ENCODE measurements at regions of chr1 and their contacts with region 1.

Region 1: GRCh38 chr1:75203415-75204277 is 69.5 kb downstream of the LHX8 start:
- DNase-seq: peak; percentile 37
- H3K4me3 ChIP-seq: no peak overlapping the region
- H3K27ac ChIP-seq: no peak overlapping the region
- H3K4me1 ChIP-seq: no peaks in the 10 kb centered on the region
- CTCF ChIP-seq: peak; percentile 88

Region 2: DNA sequence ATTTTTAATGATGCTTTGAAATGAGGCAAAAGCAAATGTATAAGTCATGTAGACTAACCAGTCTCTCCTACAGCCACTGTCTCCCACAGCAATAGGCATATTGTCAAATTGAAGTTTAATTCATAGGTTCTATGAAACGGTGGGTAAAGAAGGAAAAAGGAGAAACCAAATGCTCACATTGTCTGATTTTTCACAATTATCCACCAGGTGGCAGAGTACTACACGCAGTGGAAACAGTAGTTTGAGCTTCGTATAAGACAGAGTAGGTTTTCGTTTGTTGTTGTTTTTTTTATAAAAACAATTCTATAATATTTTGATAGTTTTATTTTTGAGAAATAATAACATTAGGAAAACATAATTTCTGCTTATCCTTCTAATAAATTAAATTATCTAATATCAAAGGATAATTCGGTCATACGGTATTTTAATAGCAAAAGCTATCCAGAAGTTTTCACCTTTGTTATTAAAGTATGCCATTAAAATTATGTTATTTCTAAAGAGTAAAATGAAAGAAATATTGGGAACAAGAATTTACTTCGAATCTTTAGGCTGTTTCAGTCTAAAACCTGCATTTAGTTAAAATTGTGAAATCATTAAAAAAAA is 431.6 kb before region 1 on chr1:
- CTCF ChIA-PET with region 1: no interaction called
- POLR2A ChIA-PET with region 1: no interaction called
- intact Hi-C with region 1: loop called (anchors 1 kb)
- DNase-seq: peak; percentile 47
- H3K4me3 ChIP-seq: no peak overlapping the region
- H3K27ac ChIP-seq: no peak overlapping the region
- H3K4me1 ChIP-seq: no peaks in the 10 kb centered on the region
- CTCF ChIP-seq: peak; percentile 86

Region 3: DNA sequence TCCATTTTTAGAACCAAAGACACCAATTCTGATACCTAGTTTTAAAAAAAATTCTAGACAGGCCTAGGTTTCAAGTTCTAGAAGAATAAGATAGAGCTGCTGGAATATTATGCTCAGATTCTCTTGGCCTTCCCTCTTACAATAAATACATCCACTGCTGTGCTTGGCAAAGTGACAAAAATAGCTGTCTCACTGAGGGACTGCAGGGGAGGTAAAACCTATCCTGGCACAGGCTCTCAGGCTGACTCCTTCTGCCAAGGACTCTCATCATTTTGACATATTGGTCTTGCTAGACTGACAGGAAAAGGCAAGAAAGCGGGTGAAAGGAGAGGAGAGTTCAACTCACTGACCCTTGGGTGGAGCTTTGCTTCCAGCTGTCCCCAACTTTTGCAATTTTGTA is 266.5 kb before region 1 on chr1:
- CTCF ChIA-PET with region 1: no interaction called
- POLR2A ChIA-PET with region 1: no interaction called
- intact Hi-C with region 1: no loop called
- DNase-seq: no peak
- H3K4me3 ChIP-seq: no peak overlapping the region
- H3K27ac ChIP-seq: no peak overlapping the region
- H3K4me1 ChIP-seq: no peaks in the 10 kb centered on the region
- CTCF ChIP-seq: no peak

Measured in OCI-LY7 (cell line).